ENCODE measurements at regions of chr22 and their contacts with region 1.

Region 1: GRCh38 chr22:39190201-39190600 is 37.7 kb upstream of the CBX7 start:
- DNase-seq: no peak
- ATAC-seq: no peak
- H3K4me3 Mint-ChIP-seq: no peak overlapping the region
- H3K27ac Mint-ChIP-seq: no peak overlapping the region
- H3K4me1 Mint-ChIP-seq: no peaks in the 10 kb centered on the region
- H3K27me3 Mint-ChIP-seq: no peaks in the 10 kb centered on the region
- CTCF ChIP-seq: no peak

Region 2: DNA sequence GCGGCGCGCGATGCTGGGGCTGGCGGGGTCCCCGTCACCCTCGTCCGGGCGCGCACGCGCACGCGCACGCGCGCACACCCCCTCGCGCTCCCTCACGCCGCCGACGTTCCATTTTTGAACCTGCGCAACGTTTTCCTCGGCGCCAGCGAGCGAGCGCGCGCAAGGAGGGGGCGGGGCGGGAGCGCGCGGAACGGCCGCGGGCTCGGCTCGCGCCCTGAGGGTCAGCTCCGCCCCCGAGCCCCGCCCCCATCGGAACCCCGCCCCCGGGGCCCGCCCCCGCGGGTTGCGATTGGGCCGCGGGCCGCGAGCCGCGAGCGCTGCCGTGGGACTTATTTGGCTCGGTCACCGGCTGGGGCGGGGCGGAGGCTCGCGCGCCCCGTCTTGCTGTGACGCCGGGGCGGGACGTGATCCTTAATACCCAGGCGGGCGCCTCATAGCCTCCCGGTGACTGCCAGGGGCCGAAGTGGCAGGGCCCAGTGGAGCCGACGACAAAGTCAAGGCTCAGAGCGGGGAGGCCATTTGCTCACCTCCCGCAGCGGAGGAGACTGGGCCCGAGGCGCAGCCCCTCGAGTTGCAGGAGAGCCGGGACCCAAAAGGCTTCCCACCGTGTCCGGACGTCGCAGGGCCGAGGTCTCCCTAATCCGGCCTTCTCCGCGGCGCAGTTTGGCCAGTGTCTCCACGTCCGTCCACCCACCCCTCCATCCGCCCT is 37.5 kb before region 1 on chr22 and contains the start of gene CBX7:
- CTCF ChIA-PET with region 1: no interaction called
- POLR2A ChIA-PET with region 1: no interaction called
- intact Hi-C with region 1: no loop called
- DNase-seq: peak; percentile 91
- ATAC-seq: peak; percentile 78
- H3K4me3 Mint-ChIP-seq: peak within 1 kb of the TSS; percentile 74
- H3K27ac Mint-ChIP-seq: peak within 1 kb of the TSS; percentile 78
- H3K4me1 Mint-ChIP-seq: peaks cover 44% of the 10 kb centered on the region
- H3K27me3 Mint-ChIP-seq: peaks cover 14% of the 10 kb centered on the region
- CTCF ChIP-seq: no peak
- total RNA-seq, gene CBX7: 23.6 to 25.0 TPM

Region 3: GRCh38 chr22:39215426-39216120 is 25.4 kb after region 1 on chr22:
- CTCF ChIA-PET with region 1: interaction called, 11 read pairs
- POLR2A ChIA-PET with region 1: no interaction called
- intact Hi-C with region 1: no loop called
- DNase-seq: peak; percentile 58
- ATAC-seq: peak; percentile 93
- H3K4me3 Mint-ChIP-seq: no peak overlapping the region
- H3K27ac Mint-ChIP-seq: no peak overlapping the region
- H3K4me1 Mint-ChIP-seq: peaks cover 6% of the 10 kb centered on the region
- H3K27me3 Mint-ChIP-seq: peaks cover 20% of the 10 kb centered on the region
- CTCF ChIP-seq: peak; percentile 47

Region 4: GRCh38 chr22:39292561-39293098 is 102.4 kb after region 1 on chr22:
- CTCF ChIA-PET with region 1: no interaction called
- POLR2A ChIA-PET with region 1: no interaction called
- intact Hi-C with region 1: no loop called
- DNase-seq: no peak
- ATAC-seq: no peak
- H3K4me3 Mint-ChIP-seq: no peak overlapping the region
- H3K27ac Mint-ChIP-seq: no peak overlapping the region
- H3K4me1 Mint-ChIP-seq: no peaks in the 10 kb centered on the region
- H3K27me3 Mint-ChIP-seq: no peaks in the 10 kb centered on the region
- CTCF ChIP-seq: no peak

Region 5: DNA sequence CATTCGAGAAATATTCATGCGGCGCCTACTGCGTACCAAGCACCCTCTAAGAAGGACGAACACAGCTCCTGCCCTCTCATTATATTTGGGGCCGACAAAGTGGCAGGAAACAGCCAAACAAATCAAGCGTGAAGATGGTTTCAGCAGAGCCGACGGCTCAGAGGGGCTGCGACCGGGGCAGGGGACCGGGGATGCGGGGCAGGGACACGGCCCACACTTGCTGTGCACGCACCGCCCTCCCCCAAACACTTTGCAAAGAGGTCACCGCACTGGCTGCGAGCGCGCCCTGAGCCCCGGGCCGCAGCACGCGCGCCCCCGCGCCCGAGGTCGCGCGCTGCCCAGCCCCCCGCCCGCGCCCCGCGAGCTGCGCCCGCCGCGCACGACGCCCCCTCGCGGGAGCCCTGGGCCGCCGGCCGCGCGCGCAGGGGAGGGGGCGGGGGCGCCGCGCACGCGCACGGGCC is 159.3 kb after region 1 on chr22:
- CTCF ChIA-PET with region 1: no interaction called
- POLR2A ChIA-PET with region 1: no interaction called
- intact Hi-C with region 1: no loop called
- DNase-seq: peak; percentile 49
- ATAC-seq: peak; percentile 68
- H3K4me3 Mint-ChIP-seq: peak overlapping the region; percentile 82
- H3K27ac Mint-ChIP-seq: peak overlapping the region; percentile 76
- H3K4me1 Mint-ChIP-seq: peaks cover 11% of the 10 kb centered on the region
- H3K27me3 Mint-ChIP-seq: peaks cover 10% of the 10 kb centered on the region
- CTCF ChIP-seq: no peak